ENCODE measurements at regions of chr1 and their contacts with region 1.

Region 1: DNA sequence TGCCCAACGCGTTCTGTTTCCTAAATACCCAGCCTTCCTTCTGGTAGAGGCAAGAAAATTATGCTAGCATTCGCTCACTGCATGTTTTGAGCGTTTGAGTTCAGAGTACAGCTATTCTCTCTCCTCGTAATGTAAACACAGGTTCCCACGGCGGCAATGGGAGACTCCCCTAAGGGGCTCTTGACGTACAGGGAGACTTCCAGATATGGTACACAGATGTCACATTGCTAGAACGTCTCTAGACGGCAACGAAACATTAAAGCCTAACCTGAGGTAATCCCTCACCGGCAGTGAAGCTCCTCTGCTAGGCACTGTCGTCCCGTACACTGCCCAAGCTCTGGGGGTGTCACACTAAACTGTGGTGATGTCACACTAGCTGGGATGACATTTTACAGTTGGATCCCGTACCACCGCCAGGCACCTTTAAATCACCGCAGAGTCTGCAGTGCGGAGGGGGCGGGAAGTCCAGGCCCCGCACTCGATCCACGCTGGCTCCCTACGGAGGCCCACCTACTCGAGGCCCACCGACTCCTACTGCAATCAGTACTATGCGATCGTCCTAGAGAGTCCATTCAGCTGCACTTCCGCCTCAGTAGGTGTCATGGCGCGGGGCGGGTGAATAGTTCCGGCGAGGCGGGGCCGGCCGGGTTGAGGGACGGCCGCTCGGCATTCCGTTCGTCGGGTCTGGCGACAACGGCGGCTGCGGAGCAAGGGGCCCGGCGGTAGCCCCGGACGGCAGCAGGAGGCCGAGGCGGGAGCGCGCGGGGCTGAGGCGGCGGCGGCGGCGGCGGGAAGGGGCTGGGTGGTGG is at the start of gene HIPK1:
- DNase-seq: peak; percentile 86
- ATAC-seq: peak; percentile 80
- H3K4me3 ChIP-seq: peak within 1 kb of the TSS; percentile 90 to 99 (median 99)
- H3K27ac ChIP-seq: peak within 1 kb of the TSS; percentile 99
- H3K4me1 ChIP-seq: peaks cover 54% of the 10 kb centered on the region
- H3K27me3 ChIP-seq: no peaks in the 10 kb centered on the region; a peak in 1 of 5 replicates
- CTCF ChIP-seq: no peak
- EP300 ChIP-seq: peak in 1 of 2 experiments; percentile 32; a peak in 2 of 4 replicates
- POLR2A ChIP-seq: peak; percentile 71 to 84
- RAD21 ChIP-seq: no peak
- total RNA-seq, gene HIPK1: 20.8 and 28.9 TPM in 2 replicates

Region 2: GRCh38 chr1:113389953-113390834 is 539.0 kb before region 1 on chr1 and contains the start of gene MAGI3:
- CTCF ChIA-PET with region 1: no interaction called
- POLR2A ChIA-PET with region 1: no interaction called
- in situ Hi-C with region 1: no loop called
- intact Hi-C with region 1: no loop called
- DNase-seq: peak; percentile 96
- ATAC-seq: peak; percentile 90
- H3K4me3 ChIP-seq: peak within 1 kb of the TSS; percentile 76 to 89 (median 77)
- H3K27ac ChIP-seq: peak within 1 kb of the TSS; percentile 86
- H3K4me1 ChIP-seq: peaks cover 38% of the 10 kb centered on the region
- H3K27me3 ChIP-seq: no peaks in the 10 kb centered on the region; a peak in 1 of 5 replicates
- CTCF ChIP-seq: peak; percentile 29; the same call in 1 of the 2 replicates
- EP300 ChIP-seq: no peak
- POLR2A ChIP-seq: peak; percentile 85 to 92
- RAD21 ChIP-seq: peak; percentile 42
- total RNA-seq, gene MAGI3: 11.3 and 11.8 TPM in 2 replicates

Region 3: GRCh38 chr1:113759333-113760101 is 169.6 kb before region 1 on chr1 and contains the start of gene PHTF1:
- CTCF ChIA-PET with region 1: no interaction called
- POLR2A ChIA-PET with region 1: interaction called, 10 read pairs
- in situ Hi-C with region 1: no loop called
- intact Hi-C with region 1: no loop called
- DNase-seq: peak; percentile 52
- ATAC-seq: peak; percentile 92
- H3K4me3 ChIP-seq: peak within 1 kb of the TSS; percentile 85 to 91 (median 91)
- H3K27ac ChIP-seq: peak within 1 kb of the TSS; percentile 98
- H3K4me1 ChIP-seq: peaks cover 35% of the 10 kb centered on the region
- H3K27me3 ChIP-seq: no peaks in the 10 kb centered on the region; a peak in 1 of 5 replicates
- CTCF ChIP-seq: no peak; the same call in 1 of the 2 replicates
- EP300 ChIP-seq: no peak
- POLR2A ChIP-seq: peak; percentile 81 to 91
- RAD21 ChIP-seq: peak; percentile 44; the same call in 1 of the 2 replicates
- total RNA-seq, gene PHTF1: 15.3 and 19.7 TPM in 2 replicates

Region 4: DNA sequence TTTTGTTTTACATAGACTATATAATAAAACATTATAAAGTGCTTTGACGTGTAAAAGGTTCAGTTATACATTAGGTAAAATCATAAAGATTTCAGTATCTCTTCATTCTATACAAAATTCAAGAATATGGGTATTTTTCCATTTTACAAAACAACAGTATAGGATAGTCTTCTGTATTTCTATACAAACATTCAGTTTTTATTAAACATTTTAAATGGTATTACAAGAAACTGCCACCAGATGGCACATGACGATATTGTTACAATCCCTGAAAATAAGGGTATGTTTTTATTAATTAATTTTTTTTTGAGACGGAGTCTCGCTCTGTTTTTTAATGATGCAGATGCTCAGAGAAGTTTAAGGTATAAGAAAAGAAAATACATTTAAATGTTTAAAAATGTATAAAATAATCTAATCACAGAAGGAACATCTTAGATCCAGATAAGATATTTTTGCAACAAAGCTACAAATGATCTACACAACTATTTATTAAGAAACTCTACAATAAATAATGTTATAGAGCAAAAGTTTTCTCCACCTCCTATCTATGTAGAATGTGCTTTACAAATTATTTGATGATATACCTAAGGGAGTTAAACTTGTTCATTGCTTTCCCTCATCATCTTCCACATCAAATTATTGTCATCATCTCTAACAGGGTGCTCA is 93.4 kb before region 1 on chr1:
- CTCF ChIA-PET with region 1: no interaction called
- POLR2A ChIA-PET with region 1: no interaction called
- in situ Hi-C with region 1: no loop called
- intact Hi-C with region 1: loop called (anchors 2 kb)
- DNase-seq: peak; percentile 42
- ATAC-seq: no peak
- H3K4me3 ChIP-seq: no peak overlapping the region
- H3K27ac ChIP-seq: no peak overlapping the region
- H3K4me1 ChIP-seq: no peaks in the 10 kb centered on the region
- H3K27me3 ChIP-seq: 0 out of 5 replicates have a peak, but pooled peaks cover 0 to 3% of the 10 kb centered on the region in 2 experiments
- CTCF ChIP-seq: peak; percentile 39
- EP300 ChIP-seq: no peak
- POLR2A ChIP-seq: no peak
- RAD21 ChIP-seq: no peak

Region 5: GRCh38 chr1:113912594-113913311 is 16.4 kb before region 1 on chr1:
- CTCF ChIA-PET with region 1: no interaction called
- POLR2A ChIA-PET with region 1: interaction called, 11 read pairs
- in situ Hi-C with region 1: no loop called
- intact Hi-C with region 1: no loop called
- DNase-seq: no peak
- ATAC-seq: no peak
- H3K4me3 ChIP-seq: no peak overlapping the region
- H3K27ac ChIP-seq: no peak overlapping the region
- H3K4me1 ChIP-seq: no peaks in the 10 kb centered on the region
- H3K27me3 ChIP-seq: no peaks in the 10 kb centered on the region
- CTCF ChIP-seq: no peak
- EP300 ChIP-seq: no peak
- POLR2A ChIP-seq: no peak
- RAD21 ChIP-seq: no peak

Region 6: GRCh38 chr1:113949007-113949406 is 19.9 kb after region 1 on chr1:
- CTCF ChIA-PET with region 1: no interaction called
- POLR2A ChIA-PET with region 1: interaction called, 37 read pairs
- in situ Hi-C with region 1: no loop called
- intact Hi-C with region 1: loop called (anchors 2 kb)
- DNase-seq: no peak
- ATAC-seq: no peak; the same call in 2 of the 3 replicates
- H3K4me3 ChIP-seq: no peak overlapping the region
- H3K27ac ChIP-seq: peak overlapping the region; percentile 62
- H3K4me1 ChIP-seq: peaks cover 58% of the 10 kb centered on the region
- H3K27me3 ChIP-seq: no peaks in the 10 kb centered on the region
- CTCF ChIP-seq: peak; percentile 7; the same call in 1 of the 2 replicates
- EP300 ChIP-seq: no peak
- POLR2A ChIP-seq: no peak
- RAD21 ChIP-seq: no peak

Region 7: DNA sequence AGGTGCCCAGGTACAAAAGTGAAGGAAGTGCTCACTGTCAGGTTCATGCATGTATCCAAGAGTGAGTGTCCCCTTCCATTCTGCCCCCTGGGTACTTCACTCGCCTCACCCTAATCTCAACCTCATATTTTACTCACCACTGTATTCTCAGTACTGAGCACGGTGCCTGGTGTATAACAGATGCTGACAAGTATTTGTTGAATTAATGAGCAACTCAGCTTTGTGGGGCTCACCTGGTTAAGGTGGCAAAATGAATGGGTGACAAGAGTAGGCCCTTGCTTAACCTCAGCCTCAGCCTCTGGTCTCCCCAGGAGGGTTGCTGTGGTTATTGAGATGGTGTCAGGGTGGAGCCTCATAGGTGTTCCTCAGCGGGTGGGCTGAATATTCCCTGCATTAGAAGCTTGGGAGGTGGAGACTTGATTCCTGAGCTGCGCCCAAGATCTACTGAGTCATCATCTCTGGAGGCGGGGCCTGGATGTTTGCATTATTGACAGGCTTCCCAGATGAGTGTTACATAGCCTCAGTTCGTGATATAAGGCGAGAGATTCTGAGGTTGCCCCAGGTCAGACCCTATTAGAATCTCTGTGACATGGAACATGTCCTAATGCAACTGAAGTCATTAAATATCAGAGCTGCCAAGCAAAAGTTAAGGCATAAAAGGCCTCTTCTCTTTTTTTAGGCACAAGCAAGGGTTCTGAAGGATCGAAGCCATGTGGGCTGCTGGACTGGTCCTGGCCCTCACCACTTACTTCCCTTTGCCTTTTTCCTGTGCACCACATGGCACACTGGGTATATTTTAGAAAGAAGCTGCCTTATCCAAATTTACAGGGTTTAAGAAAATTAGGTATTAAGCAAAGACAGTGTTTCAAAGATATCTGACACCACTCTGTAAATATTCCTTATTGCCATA is 185.3 kb after region 1 on chr1:
- CTCF ChIA-PET with region 1: no interaction called
- POLR2A ChIA-PET with region 1: no interaction called
- in situ Hi-C with region 1: no loop called
- intact Hi-C with region 1: no loop called
- DNase-seq: no peak
- ATAC-seq: no peak
- H3K4me3 ChIP-seq: no peak overlapping the region
- H3K27ac ChIP-seq: no peak overlapping the region
- H3K4me1 ChIP-seq: no peaks in the 10 kb centered on the region
- H3K27me3 ChIP-seq: peaks cover 0 to 44% of the 10 kb centered on the region in 2 experiments; a peak in 2 of 5 replicates
- CTCF ChIP-seq: no peak
- EP300 ChIP-seq: no peak
- POLR2A ChIP-seq: no peak
- RAD21 ChIP-seq: no peak

Measured in HepG2 (cell line).